Right cardiac atrium (tissue), 5 donors: ENCODE measurements at regions of chr9 and their contacts with region 1.

Region 1: GRCh38 chr9:116494815-116495634 is 192.1 kb upstream of the TRIM32 start:
- DNase-seq: peak in 1 of 3 donors; percentile 53
- ATAC-seq: peak in 1 of 2 donors; percentile 48
- H3K4me3 ChIP-seq: no peak overlapping the region
- H3K27ac ChIP-seq: no peak overlapping the region
- H3K4me1 ChIP-seq: peaks cover 3% of the 10 kb centered on the region
- H3K27me3 ChIP-seq: no peaks in the 10 kb centered on the region

Region 2: GRCh38 chr9:116163293-116164055 is 331.6 kb before region 1 on chr9:
- intact Hi-C with region 1: loop called in 2 of 4 experiments (anchors 10 kb)
- DNase-seq: no peak
- ATAC-seq: no peak
- H3K4me3 ChIP-seq: no peak overlapping the region
- H3K27ac ChIP-seq: no peak overlapping the region
- H3K4me1 ChIP-seq: no peaks in the 10 kb centered on the region
- H3K27me3 ChIP-seq: no peaks in the 10 kb centered on the region

Region 3: GRCh38 chr9:116661037-116661954 is 166.3 kb after region 1 on chr9:
- intact Hi-C with region 1: loop called in 1 of 4 experiments (anchors 10 kb)
- DNase-seq: no peak
- ATAC-seq: peak; percentile 81 to 84
- H3K4me3 ChIP-seq: no peak overlapping the region
- H3K27ac ChIP-seq: no peak overlapping the region
- H3K4me1 ChIP-seq: peaks cover 3% of the 10 kb centered on the region
- H3K27me3 ChIP-seq: no peaks in the 10 kb centered on the region